ENCODE measurements at regions of chr17 and their contacts with region 1.

Region 1: GRCh38 chr17:56653877-56654276 is 60.4 kb downstream of the NOG start:
- DNase-seq: peak; percentile 39
- ATAC-seq: peak; percentile 98
- H3K4me3 ChIP-seq: no peak overlapping the region
- H3K27ac ChIP-seq: no peak overlapping the region; the same call in 1 of the 2 replicates
- H3K4me1 ChIP-seq: no peaks in the 10 kb centered on the region; the same call in 1 of the 2 replicates
- H3K27me3 ChIP-seq: no peaks in the 10 kb centered on the region
- CTCF ChIP-seq: peak; percentile 79

Region 2: GRCh38 chr17:56510554-56511342 is 143.1 kb before region 1 on chr17:
- CTCF ChIA-PET with region 1: no interaction called
- POLR2A ChIA-PET with region 1: no interaction called
- in situ Hi-C with region 1: no loop called
- intact Hi-C with region 1: no loop called
- DNase-seq: no peak
- ATAC-seq: no peak
- H3K4me3 ChIP-seq: no peak overlapping the region
- H3K27ac ChIP-seq: no peak overlapping the region
- H3K4me1 ChIP-seq: no peaks in the 10 kb centered on the region
- H3K27me3 ChIP-seq: peaks cover 5% of the 10 kb centered on the region; the same call in 1 of the 2 replicates
- CTCF ChIP-seq: no peak

Region 3: GRCh38 chr17:56592487-56593085 is 61.3 kb before region 1 on chr17:
- CTCF ChIA-PET with region 1: no interaction called
- POLR2A ChIA-PET with region 1: no interaction called
- in situ Hi-C with region 1: no loop called
- intact Hi-C with region 1: loop called (anchors 2 kb)
- DNase-seq: no peak
- ATAC-seq: peak; percentile 70
- H3K4me3 ChIP-seq: peak overlapping the region; percentile 61 to 87
- H3K27ac ChIP-seq: no peak overlapping the region
- H3K4me1 ChIP-seq: peaks cover 13% of the 10 kb centered on the region
- H3K27me3 ChIP-seq: peaks cover 5% of the 10 kb centered on the region
- CTCF ChIP-seq: peak; percentile 99

Region 4: GRCh38 chr17:56629531-56630075 is 24.3 kb before region 1 on chr17:
- CTCF ChIA-PET with region 1: interaction called, 10 read pairs
- POLR2A ChIA-PET with region 1: no interaction called
- in situ Hi-C with region 1: no loop called
- intact Hi-C with region 1: no loop called
- DNase-seq: no peak
- ATAC-seq: peak; percentile 95
- H3K4me3 ChIP-seq: no peak overlapping the region
- H3K27ac ChIP-seq: no peak overlapping the region
- H3K4me1 ChIP-seq: no peaks in the 10 kb centered on the region
- H3K27me3 ChIP-seq: no peaks in the 10 kb centered on the region; the same call in 1 of the 2 replicates
- CTCF ChIP-seq: peak; percentile 70